ENCODE measurements at regions of chr9 and their contacts with region 1.

Region 1: GRCh38 chr9:34989003-34989945 is at the start of gene DNAJB5:
- DNase-seq: peak; percentile 97
- ATAC-seq: peak; percentile 92
- H3K4me3 ChIP-seq: peak within 1 kb of the TSS; percentile 95
- H3K27ac ChIP-seq: peak within 1 kb of the TSS; percentile 79
- H3K4me1 ChIP-seq: peaks cover 51% of the 10 kb centered on the region
- H3K27me3 ChIP-seq: no peaks in the 10 kb centered on the region
- CTCF ChIP-seq: no peak
- EP300 ChIP-seq: no peak
- POLR2A ChIP-seq: peak; percentile 71
- RAD21 ChIP-seq: no peak
- polyA plus RNA-seq, gene DNAJB5: 0.92 to 1.5 TPM

Region 2: GRCh38 chr9:34961574-34962490 is 27.4 kb before region 1 on chr9:
- CTCF ChIA-PET with region 1: interaction called, 3 read pairs
- POLR2A ChIA-PET with region 1: no interaction called
- RAD21 ChIA-PET with region 1: interaction called, 3 read pairs
- SMC1A ChIA-PET with region 1: interaction called, 16 read pairs
- in situ Hi-C with region 1: no loop called
- intact Hi-C with region 1: no loop called
- DNase-seq: no peak
- ATAC-seq: peak; percentile 85
- H3K4me3 ChIP-seq: no peak overlapping the region
- H3K27ac ChIP-seq: no peak overlapping the region
- H3K4me1 ChIP-seq: no peaks in the 10 kb centered on the region
- H3K27me3 ChIP-seq: peaks cover 8 to 25% of the 10 kb centered on the region in 2 experiments
- CTCF ChIP-seq: no peak
- EP300 ChIP-seq: no peak
- POLR2A ChIP-seq: no peak
- RAD21 ChIP-seq: no peak

Region 3: DNA sequence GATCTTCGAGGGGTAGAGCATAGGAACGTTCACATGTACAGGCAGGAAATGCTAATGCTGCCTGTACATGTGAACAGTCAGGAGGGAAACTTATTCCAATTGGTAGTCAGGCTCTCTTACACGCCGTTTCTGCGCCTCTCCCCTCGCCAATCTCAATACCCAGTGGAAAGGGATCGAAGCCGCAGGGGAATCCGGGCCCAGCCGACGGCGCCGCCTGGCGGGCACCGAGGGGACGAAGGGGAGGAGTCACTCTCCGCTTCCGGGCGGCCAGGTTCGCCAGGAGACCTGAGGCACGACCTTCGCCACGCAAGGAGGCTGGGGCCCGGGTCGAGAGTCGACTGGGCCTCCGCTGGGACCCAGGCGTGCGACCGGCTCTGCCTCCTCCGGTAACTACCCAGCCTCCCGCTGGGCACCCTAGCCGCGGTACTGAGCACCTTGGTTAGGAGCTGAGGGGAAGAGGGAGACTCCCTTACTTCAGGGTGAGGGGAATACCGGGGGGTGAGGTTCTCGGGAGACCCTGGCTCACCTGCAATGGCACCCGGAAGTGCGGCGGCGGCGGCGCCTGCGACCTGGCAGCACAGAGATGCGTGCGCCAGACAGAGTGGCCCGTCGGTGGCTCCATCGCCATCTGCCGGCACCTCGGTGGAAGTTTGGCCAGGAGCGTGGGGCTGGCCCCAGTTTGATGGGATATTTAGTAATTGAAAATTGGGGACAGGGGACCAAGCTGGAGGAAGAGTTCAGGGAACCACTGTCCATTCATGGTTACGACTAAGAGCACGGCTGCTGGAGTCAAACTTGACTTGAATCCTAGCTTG is 107.0 kb after region 1 on chr9 and contains the start of gene PIGO:
- CTCF ChIA-PET with region 1: interaction called, 4 read pairs
- POLR2A ChIA-PET with region 1: no interaction called
- RAD21 ChIA-PET with region 1: interaction called, 5 read pairs
- SMC1A ChIA-PET with region 1: interaction called, 5 read pairs
- in situ Hi-C with region 1: no loop called
- intact Hi-C with region 1: loop called (anchors 5 kb)
- DNase-seq: no peak
- ATAC-seq: peak; percentile 95
- H3K4me3 ChIP-seq: peak within 1 kb of the TSS; percentile 81
- H3K27ac ChIP-seq: peak within 1 kb of the TSS; percentile 100
- H3K4me1 ChIP-seq: peaks cover 7% of the 10 kb centered on the region
- H3K27me3 ChIP-seq: no peaks in the 10 kb centered on the region
- CTCF ChIP-seq: peak; percentile 87 to 98 (median 96)
- EP300 ChIP-seq: no peak
- POLR2A ChIP-seq: peak; percentile 98
- RAD21 ChIP-seq: peak; percentile 69
- polyA plus RNA-seq, gene PIGO: 8.3 to 13.1 TPM

Region 4: GRCh38 chr9:35161713-35162604 is 172.7 kb after region 1 on chr9 and contains the start of gene UNC13B:
- CTCF ChIA-PET with region 1: no interaction called
- POLR2A ChIA-PET with region 1: no interaction called
- RAD21 ChIA-PET with region 1: no interaction called
- SMC1A ChIA-PET with region 1: no interaction called
- in situ Hi-C with region 1: no loop called
- intact Hi-C with region 1: no loop called
- DNase-seq: peak; percentile 34
- ATAC-seq: peak; percentile 89
- H3K4me3 ChIP-seq: peak within 1 kb of the TSS; percentile 63
- H3K27ac ChIP-seq: no peak within 1 kb of the TSS
- H3K4me1 ChIP-seq: no peaks in the 10 kb centered on the region; the same call in 1 of the 2 replicates
- H3K27me3 ChIP-seq: no peaks in the 10 kb centered on the region
- CTCF ChIP-seq: no peak
- EP300 ChIP-seq: no peak
- POLR2A ChIP-seq: no peak
- RAD21 ChIP-seq: no peak
- polyA plus RNA-seq, gene UNC13B: 0.02 TPM in 1 of 2 experiments, not detected in the other

Measured in GM12878 (cell line).